Panc1 (cell line): ENCODE measurements at regions of chr5 and their contacts with region 1.

Region 1: DNA sequence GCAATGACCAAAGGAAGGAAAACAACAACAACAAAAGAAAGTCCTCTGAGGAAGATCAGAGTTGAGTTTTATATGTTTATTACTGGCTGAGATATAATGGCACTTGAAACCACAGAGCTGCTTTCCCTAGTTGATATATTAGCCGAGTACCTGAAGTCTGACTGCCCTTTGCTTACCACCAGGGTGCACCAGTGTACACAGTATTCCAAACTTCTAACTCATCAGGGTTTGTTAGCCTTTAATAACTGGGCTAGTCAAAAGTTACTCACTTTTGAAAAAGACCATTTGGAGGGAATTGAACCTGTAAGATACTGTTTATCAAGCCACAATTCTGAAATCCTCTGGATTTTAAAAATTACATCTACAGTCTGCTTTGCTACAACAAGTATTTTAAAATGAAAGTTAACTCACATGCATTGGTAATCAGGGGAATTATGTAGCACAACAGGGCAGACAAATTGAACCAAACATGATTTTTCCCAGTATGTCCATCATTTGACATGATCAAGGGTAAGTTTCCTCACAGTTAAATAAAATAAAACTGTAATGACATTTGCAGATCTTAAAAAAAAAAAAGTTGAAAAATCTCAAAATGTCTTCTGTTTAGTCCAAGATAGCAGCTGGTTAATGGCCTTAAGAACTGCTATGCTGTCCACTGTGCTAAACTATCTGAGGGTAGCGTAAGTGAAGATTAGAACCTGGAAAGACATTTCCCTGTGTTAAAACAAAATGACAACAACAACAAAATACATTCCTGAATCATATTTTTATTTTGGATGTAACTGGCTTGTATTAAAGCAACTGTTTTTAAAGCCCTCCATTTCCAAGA is 57.3 kb upstream of the C6 start:
- DNase-seq: peak; percentile 64
- ATAC-seq: peak; percentile 84
- H3K4me3 ChIP-seq: no peak overlapping the region
- H3K27ac ChIP-seq: no peak overlapping the region
- H3K4me1 ChIP-seq: no peaks in the 10 kb centered on the region
- H3K27me3 ChIP-seq: no peaks in the 10 kb centered on the region
- CTCF ChIP-seq: peak; percentile 62; the same call in 1 of the 2 replicates

Region 2: GRCh38 chr5:41433552-41434181 is 163.0 kb after region 1 on chr5:
- CTCF ChIA-PET with region 1: no interaction called
- POLR2A ChIA-PET with region 1: no interaction called
- in situ Hi-C with region 1: no loop called
- intact Hi-C with region 1: no loop called
- DNase-seq: no peak
- ATAC-seq: no peak
- H3K4me3 ChIP-seq: no peak overlapping the region
- H3K27ac ChIP-seq: no peak overlapping the region
- H3K4me1 ChIP-seq: no peaks in the 10 kb centered on the region
- H3K27me3 ChIP-seq: no peaks in the 10 kb centered on the region
- CTCF ChIP-seq: peak; percentile 37

Region 3: GRCh38 chr5:41510176-41510831 is 239.7 kb after region 1 on chr5 and contains the start of gene PLCXD3:
- CTCF ChIA-PET with region 1: no interaction called
- POLR2A ChIA-PET with region 1: no interaction called
- in situ Hi-C with region 1: no loop called
- intact Hi-C with region 1: loop called (anchors 10 kb)
- DNase-seq: no peak
- ATAC-seq: peak; percentile 81
- H3K4me3 ChIP-seq: peak within 1 kb of the TSS; percentile 25 to 52
- H3K27ac ChIP-seq: no peak within 1 kb of the TSS
- H3K4me1 ChIP-seq: no peaks in the 10 kb centered on the region
- H3K27me3 ChIP-seq: peaks cover 2% of the 10 kb centered on the region
- CTCF ChIP-seq: no peak
- total RNA-seq, gene PLCXD3: 0.10 TPM

Region 4: DNA sequence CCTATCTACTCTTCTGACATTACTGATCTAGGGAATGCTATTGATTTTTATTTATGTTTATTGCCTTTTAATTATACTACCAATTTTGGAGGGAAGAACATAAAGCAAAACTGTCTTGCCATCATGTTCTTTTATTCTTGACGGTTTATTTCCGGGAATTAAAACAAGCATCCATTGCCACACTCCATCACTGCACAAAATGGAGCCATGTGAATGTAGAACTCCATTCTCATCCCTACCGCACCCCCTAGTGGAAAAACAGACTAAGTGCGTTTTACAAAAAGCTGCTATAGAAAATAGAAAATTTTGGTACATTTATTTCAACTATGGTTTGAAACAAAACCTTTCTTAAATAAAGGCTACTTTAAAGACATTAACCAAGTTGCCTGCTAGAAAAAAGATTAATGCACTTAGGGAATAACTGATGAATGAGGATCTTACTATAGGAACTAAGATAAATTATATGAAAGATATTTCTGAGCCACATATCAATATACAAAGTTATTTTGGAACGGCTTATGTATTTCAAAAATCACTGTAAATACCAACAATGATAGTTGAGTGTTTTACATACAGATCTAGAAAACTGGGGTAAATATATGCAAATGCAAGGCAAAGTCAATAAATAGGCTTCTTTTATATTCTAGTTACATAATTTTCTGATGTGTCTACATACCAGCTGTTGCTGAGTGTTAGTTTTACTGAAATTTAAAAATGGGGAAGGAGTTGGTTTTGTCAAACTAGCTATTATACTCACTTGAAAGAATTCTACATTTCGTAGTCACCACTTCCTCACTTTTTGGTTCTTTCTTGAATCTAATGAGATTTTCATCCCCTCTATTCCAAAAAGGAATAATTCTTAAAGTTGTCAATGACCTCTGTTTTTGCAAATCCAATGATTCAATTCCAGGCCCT is 573.1 kb after region 1 on chr5:
- CTCF ChIA-PET with region 1: no interaction called
- POLR2A ChIA-PET with region 1: no interaction called
- in situ Hi-C with region 1: no loop called
- intact Hi-C with region 1: loop called (anchors 5 kb)
- DNase-seq: no peak
- ATAC-seq: peak; percentile 68
- H3K4me3 ChIP-seq: no peak overlapping the region
- H3K27ac ChIP-seq: no peak overlapping the region
- H3K4me1 ChIP-seq: no peaks in the 10 kb centered on the region
- H3K27me3 ChIP-seq: no peaks in the 10 kb centered on the region
- CTCF ChIP-seq: peak; percentile 75; the same call in 1 of the 2 replicates

Region 5: GRCh38 chr5:42423285-42424165 is 1152.9 kb after region 1 on chr5 and contains the start of gene GHR:
- CTCF ChIA-PET with region 1: no interaction called
- POLR2A ChIA-PET with region 1: no interaction called
- in situ Hi-C with region 1: no loop called
- intact Hi-C with region 1: no loop called
- DNase-seq: peak; percentile 58
- ATAC-seq: peak; percentile 97
- H3K4me3 ChIP-seq: peak within 1 kb of the TSS; percentile 38 to 50
- H3K27ac ChIP-seq: no peak within 1 kb of the TSS
- H3K4me1 ChIP-seq: peaks cover 7% of the 10 kb centered on the region
- H3K27me3 ChIP-seq: peaks cover 7% of the 10 kb centered on the region
- CTCF ChIP-seq: peak; percentile 85
- total RNA-seq, gene GHR: 0.05 TPM